CD8-positive, alpha-beta memory T cell (primary cell): ENCODE measurements at regions of chr5 and their contacts with region 1.

Region 1: DNA sequence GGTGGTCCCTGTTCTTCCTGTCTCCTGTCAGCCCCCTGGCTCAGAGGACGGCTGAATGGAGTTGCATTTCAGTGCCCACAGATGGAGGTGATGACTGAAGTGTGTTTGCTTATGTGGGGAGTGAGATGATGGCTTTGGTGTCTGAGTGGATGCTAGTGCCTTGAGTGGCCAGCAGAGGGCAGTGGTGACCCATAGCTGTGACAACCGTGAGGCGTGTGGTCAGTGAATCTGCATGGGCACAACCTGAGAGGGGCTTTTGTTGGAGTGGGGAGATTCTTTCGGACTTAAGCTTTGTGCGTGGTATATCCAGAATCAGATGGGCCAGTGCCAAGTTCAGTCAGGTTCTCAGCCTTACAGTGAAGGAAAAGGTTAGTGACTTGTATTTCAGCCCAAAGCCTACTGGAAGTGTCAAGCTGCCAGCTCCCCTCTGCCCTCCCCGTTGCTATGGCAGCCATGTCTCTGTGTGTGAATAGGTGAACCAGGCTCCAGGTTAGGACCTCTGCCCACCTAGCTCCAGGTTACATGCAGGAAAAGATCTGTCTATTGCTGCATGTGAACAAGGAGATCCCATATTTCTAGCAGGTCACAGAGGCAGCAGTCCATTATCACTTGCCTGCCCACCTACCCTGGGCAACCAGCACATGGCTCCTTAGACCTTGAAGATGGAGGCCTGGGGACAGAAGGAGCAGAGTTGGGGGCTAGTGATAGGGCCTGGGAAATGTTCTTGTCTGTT is 14.7 kb upstream of the CXXC5 start:
- DNase-seq: peak; percentile 56 to 73 (median 63)
- H3K4me3 ChIP-seq: no peak overlapping the region
- H3K4me3 Mint-ChIP-seq: peak overlapping the region in 2 of 7 donors; percentile 1 to 2
- H3K27ac ChIP-seq: no peak overlapping the region
- H3K27ac Mint-ChIP-seq: peak overlapping the region in 7 of 8 donors; percentile 6 to 83 (median 68)
- H3K4me1 ChIP-seq: peaks cover 35% of the 10 kb centered on the region
- H3K4me1 Mint-ChIP-seq: peaks cover 36 to 47% (median 43%) of the 10 kb centered on the region in 3 donors
- H3K27me3 ChIP-seq: no peaks in the 10 kb centered on the region
- H3K27me3 Mint-ChIP-seq: no peaks in the 10 kb centered on the region

Region 2: GRCh38 chr5:139651853-139652787 is 18.7 kb after region 1 on chr5:
- CTCF ChIA-PET with region 1: interaction called, 58 read pairs
- POLR2A ChIA-PET with region 1: interaction called, 57 read pairs
- DNase-seq: peak; percentile 50 to 82 (median 72)
- H3K4me3 ChIP-seq: peak overlapping the region; percentile 38
- H3K4me3 Mint-ChIP-seq: peak overlapping the region; percentile 15 to 96 (median 70)
- H3K27ac ChIP-seq: no peak overlapping the region
- H3K27ac Mint-ChIP-seq: peak overlapping the region; percentile 12 to 91 (median 78)
- H3K4me1 ChIP-seq: peaks cover 40% of the 10 kb centered on the region
- H3K4me1 Mint-ChIP-seq: peaks cover 36 to 57% (median 48%) of the 10 kb centered on the region in 3 donors
- H3K27me3 ChIP-seq: peaks cover 39% of the 10 kb centered on the region
- H3K27me3 Mint-ChIP-seq: peaks cover 11 to 26% of the 10 kb centered on the region in 2 donors

Region 3: DNA sequence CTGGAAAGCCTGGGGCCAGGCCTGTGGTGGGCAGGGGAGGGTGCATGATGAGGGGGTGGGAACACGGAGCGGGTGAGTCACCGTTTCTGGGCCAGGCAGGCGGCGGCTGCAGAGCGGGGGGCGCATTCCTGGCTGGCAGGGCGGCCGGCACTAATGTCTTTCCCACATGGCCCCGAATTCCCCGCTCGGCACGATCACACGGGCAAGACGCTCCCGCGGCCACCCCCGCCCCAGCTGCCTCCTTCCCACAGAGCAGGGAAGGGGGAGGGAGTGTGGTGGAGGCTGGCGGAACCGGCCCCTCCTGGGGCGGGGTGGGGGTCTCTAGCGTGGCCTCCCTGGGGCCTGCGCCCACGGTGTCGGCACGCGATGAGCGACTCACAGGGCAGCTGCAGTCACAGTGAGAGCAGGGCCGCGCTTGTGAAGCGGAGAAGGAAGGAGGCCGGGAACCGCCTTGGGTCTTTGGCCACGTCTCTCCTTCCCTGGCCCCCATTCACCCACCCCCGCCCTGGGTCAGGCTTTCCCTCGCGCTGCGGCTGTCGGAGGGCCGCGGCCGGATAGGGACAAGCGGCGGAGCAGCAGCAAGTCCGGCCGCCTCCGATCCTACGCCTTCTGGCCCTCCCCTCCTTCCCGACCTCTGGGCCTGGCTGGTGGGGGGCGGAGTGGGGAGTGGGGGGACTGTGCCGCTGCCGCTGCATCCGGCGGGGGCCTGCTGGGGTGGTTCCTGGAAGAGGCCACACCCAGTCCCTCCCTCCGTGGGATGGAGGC is 63.6 kb after region 1 on chr5:
- CTCF ChIA-PET with region 1: interaction called, 156 read pairs
- POLR2A ChIA-PET with region 1: interaction called, 4 read pairs
- DNase-seq: peak in 2 of 5 donors; percentile 6 to 11
- H3K4me3 ChIP-seq: peak overlapping the region; percentile 26
- H3K4me3 Mint-ChIP-seq: peak overlapping the region; percentile 39 to 81 (median 73)
- H3K27ac ChIP-seq: peak overlapping the region; percentile 64
- H3K27ac Mint-ChIP-seq: peak overlapping the region in 4 of 8 donors; percentile 39 to 88 (median 67)
- H3K4me1 ChIP-seq: peaks cover 18% of the 10 kb centered on the region
- H3K4me1 Mint-ChIP-seq: peaks cover 22 to 47% (median 29%) of the 10 kb centered on the region in 3 donors
- H3K27me3 ChIP-seq: peaks cover 7% of the 10 kb centered on the region
- H3K27me3 Mint-ChIP-seq: peaks cover 13 to 14% of the 10 kb centered on the region in 2 donors